Posterior vena cava (tissue), 2 donors: ENCODE measurements at regions of chr16 and their contacts with region 1.

Region 1: GRCh38 chr16:55756963-55757362 is 75.9 kb downstream of the CES1 start:
- DNase-seq: peak; percentile 11

Region 2: GRCh38 chr16:54901606-54902005 is 855.4 kb before region 1 on chr16:
- intact Hi-C with region 1: no loop called
- DNase-seq: no peak

Region 3: DNA sequence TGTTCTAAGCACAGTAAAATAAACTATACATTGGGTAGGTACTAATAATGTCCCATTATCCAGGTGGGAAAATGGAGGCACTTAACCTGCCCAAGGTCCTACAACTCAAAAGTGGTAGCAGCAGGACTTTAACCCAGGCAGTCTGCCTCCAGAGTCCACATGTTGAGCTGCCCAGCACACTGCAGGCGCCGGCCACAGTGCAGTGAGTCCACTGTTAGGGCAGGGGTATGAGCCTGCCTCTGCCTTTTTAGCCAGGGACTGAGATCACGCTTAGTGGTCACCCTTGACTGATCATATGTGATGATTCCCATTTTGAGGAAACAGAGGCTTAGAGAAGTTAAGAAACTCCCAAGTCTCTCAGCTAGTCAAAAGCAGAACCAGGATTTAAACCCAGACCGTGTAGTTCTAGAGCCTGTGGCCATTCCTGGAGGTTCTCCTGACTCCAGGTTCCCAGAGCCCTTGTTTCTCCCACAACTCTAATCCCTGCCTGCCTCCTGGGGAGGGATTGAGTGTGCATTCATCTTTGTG is 67.6 kb after region 1 on chr16:
- intact Hi-C with region 1: loop called in 1 of 2 experiments (anchors 10 kb)
- DNase-seq: no peak